ENCODE measurements at regions of chr20 and their contacts with region 1.

Region 1: DNA sequence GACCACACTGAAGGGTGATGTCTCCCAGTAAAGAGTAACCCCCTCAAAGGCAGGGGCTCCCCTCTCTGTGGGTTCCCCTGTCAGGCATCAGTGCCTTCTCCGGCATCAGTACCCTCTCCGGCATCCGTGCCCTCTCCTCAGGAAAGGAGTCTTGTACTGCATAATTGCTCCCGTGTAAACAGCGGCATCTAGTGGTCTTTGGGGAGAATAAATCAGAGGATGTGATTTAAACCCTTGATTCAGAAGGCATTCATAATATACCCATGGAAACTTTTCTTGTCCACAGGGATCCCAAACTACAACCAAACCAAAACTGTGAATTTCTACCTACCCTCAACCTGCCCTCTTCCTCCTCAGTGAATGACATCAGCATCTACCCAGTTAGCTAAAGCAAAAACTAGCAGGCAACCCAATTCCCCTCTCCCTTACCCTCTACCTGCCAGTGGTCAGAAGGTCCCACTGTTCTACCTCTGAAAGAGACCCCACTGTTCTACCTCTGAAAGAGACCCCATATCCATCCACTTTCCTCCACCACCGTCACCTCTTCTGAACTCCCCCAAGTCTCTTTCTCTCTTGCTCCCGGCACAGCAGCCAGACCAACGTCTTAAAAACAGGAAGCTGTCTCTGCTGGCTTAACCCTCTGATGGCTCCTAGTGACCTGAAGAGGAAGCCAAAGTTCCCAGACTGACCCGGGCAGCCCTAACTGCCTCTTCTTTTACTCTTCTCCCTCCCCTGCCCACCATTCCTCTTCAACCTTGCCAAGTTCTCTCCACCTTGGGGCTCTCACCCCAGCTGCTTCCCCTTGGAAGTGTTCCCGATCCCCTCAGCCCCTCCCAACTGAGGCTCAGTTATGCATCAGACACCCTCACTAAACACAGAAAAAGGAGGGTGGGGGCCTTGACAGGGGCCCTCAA is 27.2 kb downstream of the UBE2V1 start:
- DNase-seq: peak; percentile 85
- H3K4me3 ChIP-seq: peak overlapping the region in 1 of 3 experiments; percentile 31
- H3K27ac ChIP-seq: peak overlapping the region; percentile 91
- H3K4me1 ChIP-seq: peaks cover 19% of the 10 kb centered on the region
- H3K27me3 ChIP-seq: no peaks in the 10 kb centered on the region
- CTCF ChIP-seq: peak; percentile 71 to 80
- POLR2A ChIP-seq: no peak

Region 2: DNA sequence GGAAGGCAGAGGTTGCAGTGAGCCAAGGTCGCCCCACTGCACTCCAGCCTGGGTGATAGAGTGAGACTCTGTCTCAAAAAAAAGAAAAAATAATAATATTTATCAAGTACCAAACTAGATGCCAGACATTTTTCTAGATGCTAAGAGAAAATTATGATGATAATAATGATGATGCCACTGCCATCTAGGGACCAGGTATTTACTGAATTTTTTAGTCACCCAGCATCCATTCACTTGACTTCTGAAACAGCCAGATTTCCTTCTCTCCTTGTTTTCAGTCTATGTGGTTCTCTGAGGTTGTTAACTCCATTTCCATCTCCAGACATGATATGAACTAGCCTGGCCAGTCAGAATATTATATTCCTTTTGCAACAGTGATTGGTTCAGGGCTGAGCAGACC is 362.8 kb before region 1 on chr20:
- CTCF ChIA-PET with region 1: no interaction called
- POLR2A ChIA-PET with region 1: no interaction called
- dilution Hi-C with region 1: no loop called
- intact Hi-C with region 1: no loop called
- DNase-seq: no peak
- H3K4me3 ChIP-seq: no peak overlapping the region
- H3K27ac ChIP-seq: no peak overlapping the region
- H3K4me1 ChIP-seq: peaks cover 12% of the 10 kb centered on the region
- H3K27me3 ChIP-seq: no peaks in the 10 kb centered on the region
- CTCF ChIP-seq: no peak
- POLR2A ChIP-seq: no peak

Region 3: DNA sequence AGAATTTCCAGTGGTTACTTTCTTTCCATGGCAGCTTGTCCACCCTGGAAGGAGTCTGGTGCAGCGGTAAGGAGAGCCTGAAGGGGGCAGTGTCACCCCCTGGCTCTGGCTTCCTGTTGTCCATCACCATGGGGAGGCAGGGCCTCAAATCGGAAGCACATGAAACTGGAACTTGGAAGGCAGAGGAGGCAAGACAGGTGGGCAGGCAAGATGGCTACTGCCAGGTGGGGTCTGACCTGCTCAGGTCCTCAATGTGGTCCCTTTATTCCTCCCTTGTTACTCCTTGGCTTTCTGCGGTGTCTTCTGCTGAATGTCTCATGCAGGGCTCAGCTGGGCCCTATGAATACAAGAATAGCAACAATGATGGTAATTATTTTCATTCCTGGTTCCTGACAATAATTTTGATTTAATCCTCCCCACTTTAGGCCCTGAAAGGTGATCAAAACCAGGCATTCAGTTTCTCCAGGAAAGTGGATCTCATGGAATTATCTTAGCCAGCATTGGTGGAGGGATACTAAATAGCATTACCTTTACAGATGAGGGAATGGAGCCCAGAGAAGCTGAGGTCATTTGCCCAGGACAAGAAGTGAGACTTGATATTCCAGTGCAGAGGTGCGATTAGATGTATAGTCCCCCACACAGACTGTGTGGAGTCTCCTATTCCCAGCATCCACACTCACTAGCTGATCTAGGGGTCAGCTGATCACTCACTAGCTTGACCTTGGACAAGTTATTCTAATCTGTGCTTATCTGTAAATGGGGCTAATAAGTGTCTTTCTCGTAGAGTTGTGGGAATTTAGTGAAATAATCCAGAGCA is 120.5 kb before region 1 on chr20:
- CTCF ChIA-PET with region 1: interaction called, 13 read pairs
- POLR2A ChIA-PET with region 1: no interaction called
- dilution Hi-C with region 1: no loop called
- intact Hi-C with region 1: no loop called
- DNase-seq: peak; percentile 49
- H3K4me3 ChIP-seq: no peak overlapping the region
- H3K27ac ChIP-seq: no peak overlapping the region
- H3K4me1 ChIP-seq: peaks cover 7% of the 10 kb centered on the region
- H3K27me3 ChIP-seq: no peaks in the 10 kb centered on the region
- CTCF ChIP-seq: peak; percentile 75 to 86
- POLR2A ChIP-seq: no peak

Region 4: DNA sequence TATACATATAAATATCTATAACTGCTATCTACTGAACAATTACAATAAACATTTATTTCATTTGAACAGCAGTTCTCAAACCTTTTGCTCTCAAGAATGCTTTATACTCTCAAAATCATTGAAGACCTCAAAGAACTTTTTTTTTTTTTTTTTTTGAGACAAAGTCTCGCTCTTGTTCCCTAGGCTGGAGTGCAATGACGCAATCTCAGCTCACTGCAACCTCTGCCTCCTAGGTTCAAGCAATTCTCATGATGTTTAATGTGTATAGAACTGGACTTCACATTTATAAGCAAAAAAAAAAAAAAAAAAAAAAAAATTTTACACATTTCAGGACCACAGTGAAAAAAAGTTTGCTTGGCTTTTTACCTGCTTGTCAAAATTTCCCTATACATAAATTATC is 15.6 kb after region 1 on chr20:
- CTCF ChIA-PET with region 1: interaction called, 18 read pairs
- POLR2A ChIA-PET with region 1: no interaction called
- dilution Hi-C with region 1: no loop called
- intact Hi-C with region 1: loop called (anchors 2 kb)
- DNase-seq: no peak
- H3K4me3 ChIP-seq: no peak overlapping the region
- H3K27ac ChIP-seq: no peak overlapping the region
- H3K4me1 ChIP-seq: peaks cover 17% of the 10 kb centered on the region
- H3K27me3 ChIP-seq: no peaks in the 10 kb centered on the region
- CTCF ChIP-seq: no peak
- POLR2A ChIP-seq: no peak

Region 5: GRCh38 chr20:50110141-50110925 is 24.6 kb after region 1 on chr20:
- CTCF ChIA-PET with region 1: interaction called, 16 read pairs
- POLR2A ChIA-PET with region 1: no interaction called
- dilution Hi-C with region 1: no loop called
- intact Hi-C with region 1: loop called (anchors 2 kb)
- DNase-seq: peak; percentile 83
- H3K4me3 ChIP-seq: no peak overlapping the region
- H3K27ac ChIP-seq: peak overlapping the region; percentile 84
- H3K4me1 ChIP-seq: peaks cover 67% of the 10 kb centered on the region
- H3K27me3 ChIP-seq: no peaks in the 10 kb centered on the region
- CTCF ChIP-seq: no peak
- POLR2A ChIP-seq: no peak

Region 6: DNA sequence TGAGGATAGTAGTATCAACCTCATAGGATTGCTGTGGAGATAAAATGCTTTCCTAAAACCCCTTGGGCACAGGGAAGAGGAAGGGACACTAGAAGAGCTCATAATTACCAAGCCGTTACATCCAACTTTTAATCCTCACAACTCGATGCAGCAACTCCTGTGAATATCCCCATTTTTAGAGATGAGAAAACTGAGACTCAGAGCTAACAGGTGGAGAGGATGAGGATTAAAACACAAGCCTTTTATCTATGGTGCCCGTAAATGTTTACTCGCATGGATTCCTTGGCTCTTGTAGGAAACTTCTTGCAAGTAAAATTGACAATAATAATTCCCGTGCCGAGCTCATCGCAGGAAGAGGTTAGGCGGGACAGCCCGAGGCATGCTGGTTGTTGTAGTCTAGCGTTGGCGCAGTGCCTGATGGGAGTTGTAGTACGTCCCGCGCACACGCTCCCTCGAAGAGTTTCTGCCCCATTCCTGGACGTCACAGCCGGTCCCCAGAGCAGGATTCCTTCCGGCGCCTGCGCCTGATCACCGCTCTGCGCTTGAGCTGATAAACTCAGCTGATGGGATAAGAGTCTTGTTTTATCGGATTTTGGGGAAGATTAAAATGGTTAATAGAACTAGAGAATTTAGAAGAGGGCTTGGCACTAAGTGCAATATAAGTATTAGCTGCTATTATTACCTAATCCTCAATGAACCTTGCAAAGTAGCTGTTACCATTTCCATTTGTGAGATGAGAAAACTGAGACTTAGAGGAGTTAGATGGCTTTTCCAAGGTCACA is 30.1 kb after region 1 on chr20:
- CTCF ChIA-PET with region 1: interaction called, 16 read pairs
- POLR2A ChIA-PET with region 1: no interaction called
- dilution Hi-C with region 1: no loop called
- intact Hi-C with region 1: loop called (anchors 2 kb)
- DNase-seq: peak; percentile 98
- H3K4me3 ChIP-seq: peak overlapping the region; percentile 51 to 80 (median 63)
- H3K27ac ChIP-seq: peak overlapping the region; percentile 30
- H3K4me1 ChIP-seq: peaks cover 34% of the 10 kb centered on the region
- H3K27me3 ChIP-seq: no peaks in the 10 kb centered on the region
- CTCF ChIP-seq: no peak
- POLR2A ChIP-seq: peak; percentile 79

Region 7: GRCh38 chr20:50267041-50267865 is 181.5 kb after region 1 on chr20:
- CTCF ChIA-PET with region 1: no interaction called
- POLR2A ChIA-PET with region 1: no interaction called
- dilution Hi-C with region 1: no loop called
- intact Hi-C with region 1: no loop called
- DNase-seq: no peak
- H3K4me3 ChIP-seq: no peak overlapping the region
- H3K27ac ChIP-seq: no peak overlapping the region
- H3K4me1 ChIP-seq: no peaks in the 10 kb centered on the region
- H3K27me3 ChIP-seq: peaks cover 0 to 2% of the 10 kb centered on the region in 2 experiments
- CTCF ChIP-seq: no peak
- POLR2A ChIP-seq: no peak